Heart right ventricle (tissue), 16 donors: ENCODE measurements at regions of chr17 and their contacts with region 1.

Region 1: GRCh38 chr17:79211061-79211770 is 136.6 kb downstream of the ENGASE start:
- DNase-seq: no peak
- ATAC-seq: no peak
- H3K4me3 ChIP-seq: no peak overlapping the region
- H3K27ac ChIP-seq: no peak overlapping the region
- H3K4me1 ChIP-seq: no peaks in the 10 kb centered on the region
- H3K27me3 ChIP-seq: peaks cover 0 to 90% (median 73%) of the 10 kb centered on the region in 7 donors
- CTCF ChIP-seq: no peak

Region 2: DNA sequence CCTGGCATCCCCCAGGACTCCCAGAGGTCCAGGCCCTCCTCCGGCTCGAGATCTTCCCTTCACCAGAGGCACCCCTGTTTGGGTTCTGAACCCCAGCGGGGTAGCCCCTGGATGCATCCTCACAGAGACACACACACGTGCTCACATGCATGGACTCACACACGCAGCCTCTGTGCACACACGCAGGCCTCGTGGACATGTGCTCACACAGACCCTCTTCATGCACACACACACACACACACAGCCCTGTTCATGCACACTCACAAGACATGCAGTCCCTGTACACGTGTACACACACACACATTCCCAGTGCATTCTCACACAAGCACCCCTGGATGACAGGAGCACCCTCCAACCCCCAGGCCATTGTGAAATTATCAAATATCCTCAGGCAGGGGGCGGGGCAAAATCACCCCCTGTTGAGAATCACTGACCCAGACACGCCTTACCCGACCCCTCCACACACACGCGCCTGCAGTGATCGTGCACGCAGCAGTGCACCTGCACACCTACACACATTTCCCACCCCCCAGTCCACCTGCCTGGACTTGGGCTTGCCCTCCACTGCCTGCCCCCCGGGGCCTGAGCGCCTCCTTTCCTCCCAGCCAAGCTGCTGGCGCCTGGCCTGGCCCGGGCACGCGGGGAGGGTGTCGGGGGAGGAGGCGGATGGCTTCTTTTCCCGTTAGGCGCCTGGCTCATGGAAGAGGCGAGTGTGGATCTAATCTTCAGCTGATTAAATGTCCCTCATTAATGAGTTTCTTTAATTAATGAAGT is 74.0 kb before region 1 on chr17:
- intact Hi-C with region 1: no loop called
- DNase-seq: no peak
- ATAC-seq: no peak
- H3K4me3 ChIP-seq: no peak overlapping the region
- H3K27ac ChIP-seq: no peak overlapping the region
- H3K4me1 ChIP-seq: peaks cover 0 to 8% (median 0%) of the 10 kb centered on the region in 9 donors
- H3K27me3 ChIP-seq: peaks cover 0 to 90% (median 79%) of the 10 kb centered on the region in 7 donors
- CTCF ChIP-seq: no peak

Region 3: GRCh38 chr17:79276821-79277220 is 65.6 kb after region 1 on chr17:
- intact Hi-C with region 1: loop called in 1 of 10 experiments (anchors 2 kb)
- DNase-seq: no peak
- ATAC-seq: no peak
- H3K4me3 ChIP-seq: no peak overlapping the region
- H3K27ac ChIP-seq: no peak overlapping the region
- H3K4me1 ChIP-seq: no peaks in the 10 kb centered on the region
- H3K27me3 ChIP-seq: peaks cover 0 to 57% (median 29%) of the 10 kb centered on the region in 7 donors
- CTCF ChIP-seq: no peak